ENCODE measurements at regions of chr12 and their contacts with region 1.

Region 1: GRCh38 chr12:26870491-26871419 is 37.8 kb upstream of the ITPR2 start:
- DNase-seq: no peak
- CTCF ChIP-seq: no peak

Region 2: DNA sequence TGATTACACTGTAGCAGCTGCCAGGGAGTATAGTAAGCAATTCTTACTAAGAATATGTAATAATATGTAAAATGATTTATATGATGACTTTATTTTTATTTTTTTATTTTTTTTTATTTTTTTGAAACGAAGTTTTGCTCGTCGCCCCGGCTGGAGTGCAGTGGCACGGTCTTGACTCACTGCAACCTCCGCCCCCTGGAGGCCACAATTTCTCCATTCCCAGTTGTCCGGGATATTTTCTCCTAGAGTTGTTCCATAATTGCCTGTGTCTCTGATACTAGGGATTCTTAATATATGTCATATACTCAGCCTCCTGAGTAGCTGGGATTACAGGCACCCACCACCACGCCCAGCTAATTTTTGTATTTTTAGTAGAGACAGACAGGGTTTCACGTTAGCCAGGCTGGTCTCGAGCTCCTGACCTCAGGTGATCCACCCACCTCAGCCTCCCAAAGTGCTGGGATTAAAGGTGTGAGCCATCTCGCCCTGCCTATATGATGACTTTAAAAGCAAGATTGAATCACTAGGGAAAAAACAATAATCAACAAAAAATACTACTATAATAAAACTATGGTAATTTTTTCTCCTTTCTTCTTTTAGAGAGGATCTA is 25.6 kb before region 1 on chr12:
- CTCF ChIA-PET with region 1: interaction called, 14 read pairs
- POLR2A ChIA-PET with region 1: no interaction called
- DNase-seq: no peak
- CTCF ChIP-seq: peak; percentile 44

Measured in GM10248 (cell line).